KBM-7 (cell line): ENCODE measurements at regions of chr12 and their contacts with region 1.

Region 1: GRCh38 chr12:93002293-93003054 is 73.4 kb upstream of the EEA1 start:
- DNase-seq: no peak

Region 2: GRCh38 chr12:92342574-92342973 is 659.9 kb before region 1 on chr12:
- in situ Hi-C with region 1: no loop called
- DNase-seq: no peak

Region 3: GRCh38 chr12:92759634-92760268 is 242.7 kb before region 1 on chr12:
- in situ Hi-C with region 1: no loop called
- DNase-seq: no peak

Region 4: GRCh38 chr12:92890601-92891106 is 111.8 kb before region 1 on chr12:
- in situ Hi-C with region 1: no loop called
- DNase-seq: no peak

Region 5: GRCh38 chr12:93378373-93379325 is 376.2 kb after region 1 on chr12:
- in situ Hi-C with region 1: loop called (anchors 25 kb)
- DNase-seq: peak; percentile 79

Region 6: GRCh38 chr12:93839064-93839463 is 836.6 kb after region 1 on chr12:
- in situ Hi-C with region 1: no loop called
- DNase-seq: no peak